Activated naive CD4-positive, alpha-beta T cell treated with anti-CD3 and anti-CD28 coated beads for 36 hours (primary cell): ENCODE measurements at regions of chr2 and their contacts with region 1.

Region 1: GRCh38 chr2:127591221-127591923 is 54.6 kb upstream of the GPR17 start:
- DNase-seq: peak; percentile 78
- H3K4me3 Mint-ChIP-seq: no peak overlapping the region
- H3K27ac Mint-ChIP-seq: no peak overlapping the region
- H3K4me1 Mint-ChIP-seq: no peaks in the 10 kb centered on the region
- H3K27me3 Mint-ChIP-seq: no peaks in the 10 kb centered on the region

Region 2: GRCh38 chr2:125942585-125943424 is 1648.6 kb before region 1 on chr2:
- CTCF ChIA-PET with region 1: no interaction called
- intact Hi-C with region 1: no loop called
- DNase-seq: no peak
- H3K4me3 Mint-ChIP-seq: no peak overlapping the region
- H3K27ac Mint-ChIP-seq: no peak overlapping the region
- H3K4me1 Mint-ChIP-seq: no peaks in the 10 kb centered on the region
- H3K27me3 Mint-ChIP-seq: no peaks in the 10 kb centered on the region

Region 3: GRCh38 chr2:127577973-127578372 is 13.4 kb before region 1 on chr2:
- CTCF ChIA-PET with region 1: interaction called, 12 read pairs
- intact Hi-C with region 1: no loop called
- DNase-seq: no peak
- H3K4me3 Mint-ChIP-seq: no peak overlapping the region
- H3K27ac Mint-ChIP-seq: no peak overlapping the region
- H3K4me1 Mint-ChIP-seq: peaks cover 15% of the 10 kb centered on the region
- H3K27me3 Mint-ChIP-seq: no peaks in the 10 kb centered on the region

Region 4: GRCh38 chr2:127632592-127633489 is 41.5 kb after region 1 on chr2:
- CTCF ChIA-PET with region 1: interaction called, 12 read pairs
- intact Hi-C with region 1: no loop called
- DNase-seq: no peak
- H3K4me3 Mint-ChIP-seq: no peak overlapping the region
- H3K27ac Mint-ChIP-seq: no peak overlapping the region
- H3K4me1 Mint-ChIP-seq: peaks cover 50% of the 10 kb centered on the region
- H3K27me3 Mint-ChIP-seq: no peaks in the 10 kb centered on the region

Region 5: GRCh38 chr2:127649684-127650040 is 58.3 kb after region 1 on chr2:
- CTCF ChIA-PET with region 1: interaction called, 145 read pairs
- intact Hi-C with region 1: loop called (anchors 1 kb)
- DNase-seq: peak; percentile 91
- H3K4me3 Mint-ChIP-seq: no peak overlapping the region
- H3K27ac Mint-ChIP-seq: no peak overlapping the region
- H3K4me1 Mint-ChIP-seq: peaks cover 13% of the 10 kb centered on the region
- H3K27me3 Mint-ChIP-seq: no peaks in the 10 kb centered on the region

Region 6: GRCh38 chr2:127695491-127696472 is 104.4 kb after region 1 on chr2:
- CTCF ChIA-PET with region 1: interaction called, 4 read pairs
- intact Hi-C with region 1: loop called (anchors 1 kb)
- DNase-seq: peak; percentile 74
- H3K4me3 Mint-ChIP-seq: no peak overlapping the region
- H3K27ac Mint-ChIP-seq: no peak overlapping the region
- H3K4me1 Mint-ChIP-seq: peaks cover 7% of the 10 kb centered on the region
- H3K27me3 Mint-ChIP-seq: no peaks in the 10 kb centered on the region

Region 7: DNA sequence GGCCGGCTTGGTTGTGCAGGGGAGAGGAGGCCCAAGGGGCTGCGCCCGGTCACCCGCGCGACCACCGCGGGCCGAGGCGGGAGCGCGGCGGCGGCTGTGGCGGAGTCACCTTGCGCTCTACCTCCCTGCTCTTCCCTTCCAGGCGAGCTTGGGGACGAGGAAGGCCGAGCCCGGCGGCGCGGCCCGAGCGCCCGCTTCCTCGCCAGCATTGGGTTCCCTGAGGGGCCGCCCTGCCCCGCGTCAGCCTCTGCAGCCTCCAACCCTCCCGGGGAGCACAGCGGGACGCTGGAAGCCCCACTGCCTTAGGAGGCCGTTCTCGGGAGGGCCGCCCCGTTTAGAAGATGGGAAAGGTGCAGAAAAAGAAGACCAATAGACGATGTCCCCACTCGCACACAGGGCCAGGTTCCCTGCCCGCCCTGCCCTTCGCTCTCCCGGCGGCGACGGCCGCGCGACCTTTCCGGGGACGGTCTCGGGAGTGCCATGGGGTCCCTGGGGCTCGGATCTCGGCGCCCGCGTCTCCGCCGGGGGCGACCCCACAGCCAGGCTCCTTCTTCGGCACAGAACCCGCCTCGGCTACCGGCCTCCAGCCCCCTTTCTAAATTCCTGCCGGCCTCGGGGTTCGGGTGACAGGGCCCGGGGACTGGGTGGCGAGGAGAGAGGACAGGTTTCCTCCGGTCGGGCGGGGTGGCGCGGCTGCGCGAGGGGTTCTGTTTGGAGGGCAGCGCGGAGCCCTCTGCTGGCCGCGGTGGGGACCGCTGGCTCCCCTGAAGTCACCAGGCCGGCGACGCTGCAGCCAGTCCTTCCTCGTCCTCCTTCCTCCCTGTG is 641.8 kb after region 1 on chr2:
- CTCF ChIA-PET with region 1: no interaction called
- intact Hi-C with region 1: loop called (anchors 10 kb)
- DNase-seq: peak; percentile 91
- H3K4me3 Mint-ChIP-seq: peak overlapping the region; percentile 71
- H3K27ac Mint-ChIP-seq: no peak overlapping the region
- H3K4me1 Mint-ChIP-seq: peaks cover 4% of the 10 kb centered on the region
- H3K27me3 Mint-ChIP-seq: no peaks in the 10 kb centered on the region